Common myeloid progenitor, CD34-positive (primary cell): ENCODE measurements at regions of chr5 and their contacts with region 1.

Region 1: DNA sequence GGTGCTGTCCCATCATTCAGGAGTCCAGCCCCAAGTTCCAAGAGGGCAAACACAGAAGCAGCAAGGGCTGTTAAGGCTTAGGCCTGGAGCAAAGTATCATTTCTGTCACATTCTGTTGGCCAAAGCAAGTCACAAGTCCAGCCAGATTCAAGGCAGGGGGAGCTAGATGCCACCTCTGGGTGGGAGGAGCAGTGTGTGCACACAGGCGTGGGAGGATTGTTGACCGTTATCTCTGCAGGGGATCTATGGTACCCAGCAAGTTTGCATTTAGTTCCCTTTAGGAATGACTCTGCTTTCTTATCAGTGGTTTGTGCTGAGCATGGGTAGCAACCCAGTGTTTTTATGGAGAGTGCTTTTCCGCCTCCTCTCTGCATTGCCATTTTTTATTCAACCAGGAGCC is 278.9 kb downstream of the NR3C1 start:
- DNase-seq: peak; percentile 59 to 88 (median 82)
- H3K4me3 ChIP-seq: peak overlapping the region in 1 of 7 experiments; percentile 25
- H3K27ac ChIP-seq: peak overlapping the region; percentile 44 to 47
- H3K4me1 ChIP-seq: peaks cover 8 to 47% (median 34%) of the 10 kb centered on the region in 4 experiments
- H3K27me3 ChIP-seq: no peaks in the 10 kb centered on the region

Region 2: GRCh38 chr5:143134900-143135299 is 10.3 kb after region 1 on chr5:
- CTCF ChIA-PET with region 1: interaction called, 10 read pairs
- POLR2A ChIA-PET with region 1: no interaction called
- DNase-seq: no peak
- H3K4me3 ChIP-seq: no peak overlapping the region
- H3K27ac ChIP-seq: no peak overlapping the region
- H3K4me1 ChIP-seq: peaks cover 0 to 4% (median 2%) of the 10 kb centered on the region in 4 experiments
- H3K27me3 ChIP-seq: no peaks in the 10 kb centered on the region